Caco-2 (cell line): ENCODE measurements at regions of chrX and their contacts with region 1.

Region 1: GRCh38 chrX:85851418-85851817 is 195.9 kb downstream of the CHM start:
- DNase-seq: peak; percentile 46 to 49
- H3K4me3 ChIP-seq: no peak overlapping the region
- H3K4me3 Mint-ChIP-seq: no peak overlapping the region
- H3K27ac Mint-ChIP-seq: no peak overlapping the region
- H3K4me1 ChIP-seq: no peaks in the 10 kb centered on the region
- H3K4me1 Mint-ChIP-seq: no peaks in the 10 kb centered on the region
- H3K27me3 ChIP-seq: no peaks in the 10 kb centered on the region
- H3K27me3 Mint-ChIP-seq: no peaks in the 10 kb centered on the region
- CTCF ChIP-seq: peak; percentile 31 to 72

Region 2: GRCh38 chrX:85611926-85612325 is 239.5 kb before region 1 on chrX:
- CTCF ChIA-PET with region 1: no interaction called
- POLR2A ChIA-PET with region 1: no interaction called
- intact Hi-C with region 1: loop called (anchors 2 kb)
- DNase-seq: no peak
- H3K4me3 ChIP-seq: no peak overlapping the region
- H3K4me3 Mint-ChIP-seq: no peak overlapping the region
- H3K27ac Mint-ChIP-seq: no peak overlapping the region
- H3K4me1 ChIP-seq: no peaks in the 10 kb centered on the region
- H3K4me1 Mint-ChIP-seq: no peaks in the 10 kb centered on the region
- H3K27me3 ChIP-seq: no peaks in the 10 kb centered on the region
- H3K27me3 Mint-ChIP-seq: peaks cover 2% of the 10 kb centered on the region
- CTCF ChIP-seq: no peak

Region 3: GRCh38 chrX:86002076-86002896 is 150.9 kb after region 1 on chrX:
- CTCF ChIA-PET with region 1: no interaction called
- POLR2A ChIA-PET with region 1: no interaction called
- intact Hi-C with region 1: loop called (anchors 5 kb)
- DNase-seq: peak; percentile 76 to 77
- H3K4me3 ChIP-seq: peak overlapping the region; percentile 4; the same call in 1 of the 2 replicates
- H3K4me3 Mint-ChIP-seq: peak overlapping the region; percentile 63
- H3K27ac Mint-ChIP-seq: peak overlapping the region; percentile 45
- H3K4me1 ChIP-seq: no peaks in the 10 kb centered on the region
- H3K4me1 Mint-ChIP-seq: peaks cover 7% of the 10 kb centered on the region
- H3K27me3 ChIP-seq: no peaks in the 10 kb centered on the region
- H3K27me3 Mint-ChIP-seq: no peaks in the 10 kb centered on the region
- CTCF ChIP-seq: no peak

Region 4: DNA sequence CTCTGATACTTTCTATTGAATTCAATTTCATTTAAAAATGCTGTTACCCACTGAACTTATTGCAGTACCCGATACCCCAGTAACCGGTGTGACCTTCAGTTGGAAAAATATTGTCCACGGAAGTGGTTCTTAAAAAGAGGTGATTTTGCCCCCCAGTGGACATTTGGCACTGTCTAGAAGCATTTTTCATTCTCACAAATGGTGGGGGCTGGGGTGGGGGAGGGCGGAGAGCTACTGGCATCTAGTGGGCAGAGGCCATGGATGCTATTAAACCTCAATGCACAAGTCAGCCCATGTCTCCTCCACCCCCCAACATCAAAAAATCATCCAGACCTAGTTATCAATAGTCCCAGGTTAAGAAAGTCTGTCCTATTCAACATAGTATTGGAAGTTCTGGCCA is 215.6 kb after region 1 on chrX:
- CTCF ChIA-PET with region 1: no interaction called
- POLR2A ChIA-PET with region 1: no interaction called
- intact Hi-C with region 1: loop called (anchors 1 kb)
- DNase-seq: peak in 1 of 2 experiments; percentile 12
- H3K4me3 ChIP-seq: no peak overlapping the region
- H3K4me3 Mint-ChIP-seq: no peak overlapping the region
- H3K27ac Mint-ChIP-seq: no peak overlapping the region
- H3K4me1 ChIP-seq: no peaks in the 10 kb centered on the region
- H3K4me1 Mint-ChIP-seq: no peaks in the 10 kb centered on the region
- H3K27me3 ChIP-seq: no peaks in the 10 kb centered on the region
- H3K27me3 Mint-ChIP-seq: no peaks in the 10 kb centered on the region
- CTCF ChIP-seq: peak; percentile 21 to 55

Region 5: DNA sequence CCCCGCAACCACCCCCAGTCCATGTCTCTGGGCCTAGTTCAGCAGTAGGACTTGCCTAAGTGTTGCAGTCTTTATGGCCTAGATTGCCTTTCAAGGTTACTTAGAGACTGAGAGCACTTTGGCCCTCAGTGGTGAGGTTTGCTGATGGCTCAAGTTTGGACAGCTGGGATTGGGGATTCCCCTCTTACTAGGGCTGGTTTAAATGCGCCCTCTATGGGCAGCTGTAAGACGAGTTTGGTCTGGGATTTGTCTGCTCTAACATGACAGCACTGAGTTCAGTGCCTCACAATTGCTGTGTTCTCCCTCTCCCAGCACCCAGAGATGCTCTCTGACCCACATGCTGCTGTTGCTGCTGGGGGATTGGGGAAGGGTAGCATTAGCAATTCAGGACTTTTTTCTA is 319.9 kb after region 1 on chrX:
- CTCF ChIA-PET with region 1: no interaction called
- POLR2A ChIA-PET with region 1: no interaction called
- intact Hi-C with region 1: loop called (anchors 1 kb)
- DNase-seq: peak; percentile 14 to 31
- H3K4me3 ChIP-seq: no peak overlapping the region
- H3K4me3 Mint-ChIP-seq: no peak overlapping the region
- H3K27ac Mint-ChIP-seq: no peak overlapping the region
- H3K4me1 ChIP-seq: no peaks in the 10 kb centered on the region
- H3K4me1 Mint-ChIP-seq: no peaks in the 10 kb centered on the region
- H3K27me3 ChIP-seq: no peaks in the 10 kb centered on the region
- H3K27me3 Mint-ChIP-seq: peaks cover 10% of the 10 kb centered on the region
- CTCF ChIP-seq: peak; percentile 17 to 23

Region 6: GRCh38 chrX:87299563-87300160 is 1448.2 kb after region 1 on chrX:
- CTCF ChIA-PET with region 1: no interaction called
- POLR2A ChIA-PET with region 1: no interaction called
- intact Hi-C with region 1: loop called (anchors 10 kb)
- DNase-seq: peak in 1 of 2 experiments; percentile 1
- H3K4me3 ChIP-seq: no peak overlapping the region
- H3K4me3 Mint-ChIP-seq: no peak overlapping the region
- H3K27ac Mint-ChIP-seq: no peak overlapping the region
- H3K4me1 ChIP-seq: no peaks in the 10 kb centered on the region
- H3K4me1 Mint-ChIP-seq: no peaks in the 10 kb centered on the region
- H3K27me3 ChIP-seq: no peaks in the 10 kb centered on the region
- H3K27me3 Mint-ChIP-seq: no peaks in the 10 kb centered on the region
- CTCF ChIP-seq: peak; percentile 28 to 39